MCF 10A (cell line): ENCODE measurements at regions of chr4 and their contacts with region 1.

Region 1: DNA sequence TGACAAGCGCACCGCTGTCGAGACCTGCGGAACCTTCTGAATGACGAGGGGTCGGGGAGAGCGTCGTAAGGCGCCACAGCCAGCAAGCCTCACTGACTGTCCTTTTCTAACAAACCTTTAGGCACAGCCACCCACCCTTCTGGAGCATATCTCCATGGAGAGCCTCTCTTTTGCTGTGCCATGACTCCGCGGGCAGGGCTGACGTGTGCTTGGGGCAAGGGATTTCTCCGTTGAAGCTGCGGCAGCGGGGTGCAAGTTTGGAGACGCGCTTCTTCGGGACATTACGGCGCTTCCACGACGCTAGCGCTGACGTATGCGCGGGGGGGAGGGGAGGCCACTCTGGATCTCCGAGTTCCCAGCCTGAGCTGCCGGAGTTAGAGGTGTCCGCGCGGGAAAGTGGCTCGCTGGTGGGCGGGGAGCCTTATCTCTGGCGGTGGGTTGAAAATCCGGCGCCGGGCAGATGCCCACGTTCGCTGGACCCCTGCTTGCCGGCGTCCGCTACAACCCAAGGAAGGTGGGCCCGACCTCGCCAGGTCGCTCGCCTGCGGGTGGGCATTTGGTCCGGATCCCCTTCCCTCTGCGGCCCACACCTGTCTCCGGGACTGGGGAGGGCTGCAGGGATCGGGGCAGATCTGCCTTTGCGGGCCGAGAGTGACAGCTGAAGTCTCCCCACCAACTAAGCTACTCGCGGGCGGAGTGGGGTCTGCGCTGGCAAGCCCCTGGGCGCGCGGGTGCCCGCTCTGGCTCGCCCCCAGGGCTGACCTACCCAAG is 543 bp upstream of the SLC10A7 start:
- DNase-seq: peak; percentile 85
- H3K4me3 Mint-ChIP-seq: no peak overlapping the region
- H3K27ac Mint-ChIP-seq: no peak overlapping the region
- H3K4me1 Mint-ChIP-seq: peaks cover 22% of the 10 kb centered on the region
- H3K27me3 Mint-ChIP-seq: no peaks in the 10 kb centered on the region
- CTCF ChIP-seq: no peak

Region 2: DNA sequence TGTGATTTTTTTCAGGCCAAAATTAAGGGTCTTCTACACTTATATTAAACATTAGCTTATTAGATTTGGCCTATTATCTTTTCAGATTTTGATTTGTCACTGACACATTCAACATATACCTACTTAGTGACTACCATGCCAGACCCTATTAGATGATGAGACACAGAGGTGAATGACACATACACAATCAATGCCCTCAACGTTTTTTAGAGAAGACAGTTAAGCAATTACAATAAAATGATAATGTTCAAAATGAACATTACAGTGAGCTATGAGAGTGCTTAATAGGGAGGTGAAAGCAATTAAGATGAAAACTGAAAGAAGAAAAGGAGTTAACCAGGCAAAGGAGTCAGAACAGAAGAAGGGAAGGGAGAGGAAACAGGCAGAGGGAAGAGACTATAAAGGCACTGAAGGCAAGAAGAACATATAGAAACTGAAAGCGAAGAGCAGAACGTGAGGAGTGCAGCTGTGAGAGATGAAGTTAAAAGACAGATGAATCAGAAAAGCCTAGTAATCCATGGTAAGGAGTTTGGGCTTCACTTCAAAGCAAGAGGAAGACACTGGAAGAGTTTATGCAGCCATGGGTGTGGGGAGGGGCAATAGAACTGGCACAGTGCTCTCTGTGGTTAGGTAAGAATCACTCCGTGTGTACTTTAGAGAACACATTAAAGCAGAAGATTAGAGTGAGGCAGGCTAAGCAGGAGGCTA is 188.9 kb before region 1 on chr4:
- CTCF ChIA-PET with region 1: no interaction called
- POLR2A ChIA-PET with region 1: interaction called, 10 read pairs
- intact Hi-C with region 1: no loop called
- DNase-seq: peak; percentile 86
- H3K4me3 Mint-ChIP-seq: no peak overlapping the region
- H3K27ac Mint-ChIP-seq: no peak overlapping the region
- H3K4me1 Mint-ChIP-seq: peaks cover 22% of the 10 kb centered on the region
- H3K27me3 Mint-ChIP-seq: no peaks in the 10 kb centered on the region
- CTCF ChIP-seq: no peak

Region 3: DNA sequence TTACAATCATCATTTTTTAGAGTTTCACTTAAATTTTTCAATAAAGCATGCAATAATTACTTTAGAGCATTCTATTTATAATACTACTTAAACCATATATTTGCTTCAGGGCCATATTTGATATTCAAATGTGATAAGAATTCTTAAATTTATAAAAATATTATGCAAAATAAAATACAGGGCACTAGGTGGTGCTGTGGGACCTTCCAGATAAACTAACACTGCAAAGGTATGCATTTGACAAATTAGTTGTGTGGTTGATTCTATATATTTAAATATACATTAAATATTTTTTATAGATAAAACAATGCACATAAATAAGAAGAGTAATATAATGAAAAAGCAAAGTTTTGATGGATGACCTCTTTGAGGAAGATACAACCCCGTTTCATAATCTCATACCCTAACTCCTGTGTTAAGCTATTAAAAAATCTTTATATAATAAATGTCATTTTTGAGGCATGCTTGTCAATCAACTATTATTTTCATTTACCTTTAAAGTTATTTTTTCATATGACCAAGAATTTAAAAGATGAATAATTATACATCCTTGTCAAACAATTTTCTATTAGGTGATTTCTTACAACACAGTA is 179.6 kb before region 1 on chr4:
- CTCF ChIA-PET with region 1: interaction called, 15 read pairs
- POLR2A ChIA-PET with region 1: interaction called, 4 read pairs
- intact Hi-C with region 1: loop called (anchors 5 kb)
- DNase-seq: peak; percentile 50
- H3K4me3 Mint-ChIP-seq: no peak overlapping the region
- H3K27ac Mint-ChIP-seq: no peak overlapping the region
- H3K4me1 Mint-ChIP-seq: no peaks in the 10 kb centered on the region
- H3K27me3 Mint-ChIP-seq: no peaks in the 10 kb centered on the region
- CTCF ChIP-seq: peak; percentile 61

Region 4: GRCh38 chr4:146638801-146639605 is 116.7 kb after region 1 on chr4 and contains the start of gene POU4F2:
- CTCF ChIA-PET with region 1: no interaction called
- POLR2A ChIA-PET with region 1: no interaction called
- intact Hi-C with region 1: loop called (anchors 10 kb)
- DNase-seq: no peak
- H3K4me3 Mint-ChIP-seq: no peak within 1 kb of the TSS
- H3K27ac Mint-ChIP-seq: no peak within 1 kb of the TSS
- H3K4me1 Mint-ChIP-seq: peaks cover 5% of the 10 kb centered on the region
- H3K27me3 Mint-ChIP-seq: peaks cover 57% of the 10 kb centered on the region
- CTCF ChIP-seq: no peak
- total RNA-seq, gene POU4F2: not detected in 2 replicates

Region 5: GRCh38 chr4:146709956-146710355 is 187.7 kb after region 1 on chr4:
- CTCF ChIA-PET with region 1: no interaction called
- POLR2A ChIA-PET with region 1: no interaction called
- intact Hi-C with region 1: no loop called
- DNase-seq: no peak
- H3K4me3 Mint-ChIP-seq: no peak overlapping the region
- H3K27ac Mint-ChIP-seq: no peak overlapping the region
- H3K4me1 Mint-ChIP-seq: no peaks in the 10 kb centered on the region
- H3K27me3 Mint-ChIP-seq: no peaks in the 10 kb centered on the region
- CTCF ChIP-seq: no peak

Region 6: DNA sequence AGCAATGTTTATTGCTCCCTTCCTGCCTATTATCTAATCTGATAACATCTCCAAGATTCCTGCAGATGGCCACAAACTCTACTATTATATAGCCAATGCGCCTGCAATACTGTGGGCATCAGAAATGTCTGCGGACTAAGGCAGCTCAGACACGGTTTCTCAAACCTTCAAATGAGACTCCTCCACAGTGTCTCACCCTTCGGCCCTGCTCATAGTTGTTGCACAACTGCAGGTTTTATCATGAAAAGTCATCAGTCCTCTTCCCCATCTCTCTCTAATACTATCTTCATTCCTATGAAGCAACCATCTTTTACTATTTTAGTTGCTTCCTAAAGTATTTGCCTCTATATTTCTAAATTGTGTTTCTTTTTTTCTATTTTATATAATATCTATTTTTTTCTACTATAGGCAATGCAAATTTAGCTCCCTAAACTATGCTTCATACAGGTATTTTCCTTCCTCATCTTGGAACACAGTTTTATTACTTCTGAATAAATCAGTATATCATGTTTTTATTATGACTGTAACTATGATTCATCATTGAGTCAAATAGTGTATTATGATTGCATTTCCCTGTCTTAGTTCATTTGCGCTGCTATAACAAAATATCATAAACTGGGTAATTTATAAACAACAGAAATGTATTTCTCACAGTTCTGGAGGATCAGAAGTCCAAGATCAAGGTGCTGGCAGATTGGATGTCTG is 829.0 kb after region 1 on chr4:
- CTCF ChIA-PET with region 1: no interaction called
- POLR2A ChIA-PET with region 1: no interaction called
- intact Hi-C with region 1: no loop called
- DNase-seq: peak; percentile 52
- H3K4me3 Mint-ChIP-seq: no peak overlapping the region
- H3K27ac Mint-ChIP-seq: no peak overlapping the region
- H3K4me1 Mint-ChIP-seq: peaks cover 6% of the 10 kb centered on the region
- H3K27me3 Mint-ChIP-seq: no peaks in the 10 kb centered on the region
- CTCF ChIP-seq: no peak